Ascending aorta (tissue), 2 donors: ENCODE measurements at regions of chr1 and their contacts with region 1.

Region 1: GRCh38 chr1:25204797-25205480 is 27.4 kb downstream of the SYF2 start:
- DNase-seq: no peak
- H3K4me3 ChIP-seq: no peak overlapping the region
- H3K27ac ChIP-seq: no peak overlapping the region
- H3K4me1 ChIP-seq: no peaks in the 10 kb centered on the region
- H3K27me3 ChIP-seq: no peaks in the 10 kb centered on the region
- CTCF ChIP-seq: peak; percentile 59 to 74 (median 74)

Region 2: GRCh38 chr1:24847995-24848881 is 356.7 kb before region 1 on chr1:
- intact Hi-C with region 1: loop called (anchors 5 kb)
- DNase-seq: peak; percentile 79 to 95
- H3K4me3 ChIP-seq: peak overlapping the region; percentile 65 to 67
- H3K27ac ChIP-seq: peak overlapping the region; percentile 52 to 67
- H3K4me1 ChIP-seq: peaks cover 0 to 14% of the 10 kb centered on the region in 2 donors
- H3K27me3 ChIP-seq: no peaks in the 10 kb centered on the region
- CTCF ChIP-seq: peak; percentile 88 to 93 (median 92)

Region 3: DNA sequence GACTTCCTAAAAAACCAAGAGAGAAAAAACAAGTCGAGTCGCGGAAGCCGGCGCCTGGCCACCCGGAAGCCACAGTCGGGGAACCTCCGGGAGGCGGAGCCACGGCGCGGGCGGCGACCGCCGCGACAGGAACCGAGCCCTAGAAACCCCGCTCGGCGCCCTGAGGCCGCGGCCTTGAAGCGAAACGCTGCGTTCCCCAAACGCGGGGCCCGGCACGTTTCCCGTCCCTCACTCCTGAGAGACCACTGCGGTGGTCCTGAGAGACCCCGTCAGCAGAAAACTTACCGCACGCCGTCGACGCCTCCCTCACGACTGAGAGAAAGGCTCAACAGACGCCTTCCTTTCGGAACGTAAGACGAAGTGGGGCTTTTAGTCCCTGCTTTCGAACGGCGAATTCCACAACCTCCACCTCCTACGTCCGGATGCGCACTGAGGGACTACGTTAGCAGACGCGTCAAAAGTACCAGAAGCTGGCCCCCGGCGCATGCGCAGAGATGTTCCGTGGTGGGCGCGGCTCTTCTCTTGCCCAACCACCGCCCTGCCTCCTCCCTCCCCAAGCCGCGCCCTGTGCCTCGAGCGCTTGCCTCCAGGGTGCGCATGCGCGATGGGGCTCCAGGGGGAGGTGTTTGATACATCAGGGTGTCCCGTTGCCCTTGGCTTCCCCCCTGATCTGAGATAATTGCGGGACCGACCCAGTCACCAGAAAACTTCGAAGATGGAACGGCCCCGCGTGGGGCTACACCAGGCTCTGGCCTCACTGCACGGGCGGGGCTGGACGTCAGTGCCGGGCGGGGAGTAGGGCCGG is 42.3 kb after region 1 on chr1 and contains the start of gene RSRP1:
- intact Hi-C with region 1: no loop called
- DNase-seq: peak; percentile 97 to 100
- H3K4me3 ChIP-seq: peak within 1 kb of the TSS; percentile 69 to 99
- H3K27ac ChIP-seq: peak within 1 kb of the TSS; percentile 96 to 100
- H3K4me1 ChIP-seq: peaks cover 10 to 22% of the 10 kb centered on the region in 2 donors
- H3K27me3 ChIP-seq: no peaks in the 10 kb centered on the region
- CTCF ChIP-seq: peak in 1 of 3 experiments; percentile 26
- total RNA-seq, gene RSRP1: 126 TPM